PC-3 (cell line): ENCODE measurements at regions of chr3 and their contacts with region 1.

Region 1: GRCh38 chr3:131231710-131232389 is 149.7 kb upstream of the NUDT16 start:
- DNase-seq: peak; percentile 49
- ATAC-seq: peak; percentile 59
- H3K4me3 ChIP-seq: no peak overlapping the region
- H3K27ac ChIP-seq: no peak overlapping the region
- H3K4me1 ChIP-seq: no peaks in the 10 kb centered on the region
- H3K27me3 ChIP-seq: no peaks in the 10 kb centered on the region
- CTCF ChIP-seq: peak; percentile 41

Region 2: DNA sequence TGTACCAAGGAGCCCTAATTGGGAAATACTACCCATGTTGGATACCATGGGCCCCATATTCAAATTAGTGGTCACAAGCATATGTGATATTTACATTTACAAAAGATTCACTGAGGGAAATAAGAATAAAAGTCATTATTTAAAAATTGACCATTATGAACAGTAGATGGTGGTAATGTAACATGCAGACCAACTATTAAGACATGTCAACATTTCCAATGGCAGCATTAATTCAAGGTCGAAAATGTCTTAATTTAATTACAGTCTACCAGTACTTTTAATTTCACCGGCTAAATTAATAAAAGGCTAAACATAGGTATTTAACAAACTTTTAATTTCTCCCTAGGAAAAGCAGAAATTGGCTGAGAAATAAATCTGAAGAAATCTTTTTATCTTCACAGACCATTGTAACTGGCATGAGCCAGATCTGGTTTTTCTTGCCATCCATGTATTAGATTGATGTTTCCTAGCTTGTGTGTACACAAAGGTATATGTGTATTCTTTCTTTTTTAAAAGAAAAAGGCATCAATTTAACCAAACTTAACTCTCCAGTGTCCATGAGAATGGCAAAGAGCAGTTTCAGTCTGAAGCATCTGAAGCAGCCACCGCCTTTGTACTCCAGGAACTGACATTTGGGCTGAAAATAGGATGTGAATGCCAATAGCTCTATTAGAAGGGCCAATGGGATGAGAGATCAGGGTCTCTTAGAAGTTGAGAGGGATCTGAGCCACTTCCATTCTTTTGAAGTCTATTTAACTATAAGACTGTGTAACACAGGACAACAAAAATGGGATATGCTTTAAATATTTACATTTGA is 178.6 kb before region 1 on chr3:
- CTCF ChIA-PET with region 1: no interaction called
- POLR2A ChIA-PET with region 1: no interaction called
- intact Hi-C with region 1: no loop called
- DNase-seq: peak; percentile 28
- ATAC-seq: 0 out of 2 replicates have a peak, but pooled peaks have one; percentile 27
- H3K4me3 ChIP-seq: no peak overlapping the region
- H3K27ac ChIP-seq: no peak overlapping the region
- H3K4me1 ChIP-seq: no peaks in the 10 kb centered on the region
- H3K27me3 ChIP-seq: no peaks in the 10 kb centered on the region
- CTCF ChIP-seq: peak; percentile 56

Region 3: GRCh38 chr3:131167867-131168266 is 64.0 kb before region 1 on chr3:
- CTCF ChIA-PET with region 1: no interaction called
- POLR2A ChIA-PET with region 1: no interaction called
- intact Hi-C with region 1: no loop called
- DNase-seq: no peak
- ATAC-seq: no peak
- H3K4me3 ChIP-seq: no peak overlapping the region
- H3K27ac ChIP-seq: no peak overlapping the region
- H3K4me1 ChIP-seq: no peaks in the 10 kb centered on the region
- H3K27me3 ChIP-seq: no peaks in the 10 kb centered on the region
- CTCF ChIP-seq: no peak

Region 4: DNA sequence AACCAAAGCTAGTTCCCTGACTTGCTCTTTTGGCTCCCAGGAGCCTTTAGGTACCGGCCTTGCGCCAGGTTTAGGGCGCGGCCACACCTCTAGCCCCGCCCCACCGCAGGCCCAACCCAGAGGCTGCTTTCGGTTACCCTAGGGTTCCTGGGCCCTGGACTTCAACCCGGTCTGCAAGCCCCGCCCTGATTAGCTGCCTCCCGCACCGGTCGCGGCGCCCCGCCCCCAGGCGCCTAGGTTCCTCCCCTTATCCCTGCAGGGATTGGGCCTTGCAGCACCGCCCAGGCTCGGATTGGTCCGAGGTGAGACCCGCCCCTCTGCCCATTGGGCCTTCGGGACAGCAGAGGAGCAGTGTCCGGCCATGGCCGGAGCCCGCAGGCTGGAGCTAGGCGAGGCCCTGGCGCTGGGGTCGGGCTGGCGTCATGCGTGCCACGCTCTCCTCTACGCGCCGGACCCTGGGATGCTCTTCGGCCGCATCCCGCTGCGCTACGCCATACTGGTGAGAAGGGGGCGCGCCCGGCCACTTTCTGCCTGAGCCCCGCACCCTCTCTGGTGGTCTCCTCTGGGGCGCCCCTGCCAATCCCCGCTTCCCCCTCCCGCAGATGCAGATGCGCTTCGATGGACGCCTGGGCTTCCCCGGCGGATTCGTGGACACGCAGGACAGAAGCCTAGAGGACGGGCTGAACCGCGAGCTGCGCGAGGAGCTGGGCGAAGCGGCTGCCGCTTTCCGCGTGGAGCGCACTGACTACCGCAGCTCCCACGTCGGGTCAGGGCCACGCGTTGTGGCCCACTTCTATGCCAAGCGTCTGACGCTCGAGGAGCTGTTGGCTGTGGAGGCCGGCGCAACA is 149.8 kb after region 1 on chr3 and contains the start of gene NUDT16:
- CTCF ChIA-PET with region 1: no interaction called
- POLR2A ChIA-PET with region 1: no interaction called
- intact Hi-C with region 1: loop called (anchors 10 kb)
- DNase-seq: peak; percentile 97
- ATAC-seq: peak; percentile 97
- H3K4me3 ChIP-seq: peak within 1 kb of the TSS; percentile 83
- H3K27ac ChIP-seq: no peak within 1 kb of the TSS
- H3K4me1 ChIP-seq: peaks cover 6% of the 10 kb centered on the region; the same call in 1 of the 2 replicates
- H3K27me3 ChIP-seq: no peaks in the 10 kb centered on the region
- CTCF ChIP-seq: no peak
- total RNA-seq, gene NUDT16: 7.9 and 8.6 TPM in 2 replicates